ENCODE measurements at regions of chr6 and their contacts with region 1.

Region 1: DNA sequence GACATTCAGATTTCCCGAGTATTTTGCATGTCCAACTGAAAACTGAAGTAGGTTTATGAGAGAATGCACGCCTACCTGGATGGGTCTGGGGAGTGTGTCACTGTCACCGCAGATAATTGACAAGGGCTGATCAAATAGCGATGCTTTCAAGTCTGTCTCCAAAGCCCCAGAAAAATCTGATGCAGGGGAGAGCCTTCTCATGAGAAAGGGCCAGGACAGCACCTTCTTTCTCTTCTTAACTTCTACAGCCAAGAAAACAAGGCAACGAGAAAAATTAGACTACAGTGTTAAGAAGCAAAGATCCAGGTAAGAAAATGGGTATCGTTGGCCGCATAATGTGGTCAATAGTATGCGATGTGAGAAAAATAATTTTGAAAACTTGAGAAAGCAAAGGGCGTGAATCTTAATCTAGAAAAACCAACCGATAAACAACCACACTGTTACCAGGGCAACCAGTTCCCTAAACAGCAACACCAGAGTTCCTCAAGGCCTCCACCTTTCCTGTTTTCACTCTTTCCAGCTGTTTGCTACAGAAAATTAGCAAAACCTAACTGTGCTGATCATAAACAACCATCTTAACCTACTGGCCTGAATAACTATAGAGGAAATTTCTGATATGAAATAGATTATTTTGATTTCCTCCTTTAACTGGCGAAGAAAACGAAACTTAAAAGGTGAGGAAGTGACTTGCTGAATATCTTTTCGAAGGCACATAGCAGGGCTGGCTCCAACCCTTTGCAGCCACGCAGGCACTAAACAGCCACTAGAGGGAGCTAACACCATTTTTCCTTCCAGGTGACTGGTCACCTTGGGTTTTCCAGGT is 2.6 kb downstream of the TAGAP start:
- DNase-seq: peak; percentile 93
- ATAC-seq: peak; percentile 44
- H3K4me3 ChIP-seq: peak overlapping the region; percentile 72 to 100 (median 93)
- H3K4me3 Mint-ChIP-seq: peak overlapping the region; percentile 100
- H3K27ac ChIP-seq: peak overlapping the region; percentile 98 to 99
- H3K27ac Mint-ChIP-seq: peak overlapping the region; percentile 99
- H3K4me1 ChIP-seq: peaks cover 61 to 67% of the 10 kb centered on the region in 2 donors
- H3K4me1 Mint-ChIP-seq: peaks cover 72% of the 10 kb centered on the region
- H3K27me3 ChIP-seq: no peaks in the 10 kb centered on the region
- H3K27me3 Mint-ChIP-seq: no peaks in the 10 kb centered on the region
- CTCF ChIP-seq: peak; percentile 100

Region 2: DNA sequence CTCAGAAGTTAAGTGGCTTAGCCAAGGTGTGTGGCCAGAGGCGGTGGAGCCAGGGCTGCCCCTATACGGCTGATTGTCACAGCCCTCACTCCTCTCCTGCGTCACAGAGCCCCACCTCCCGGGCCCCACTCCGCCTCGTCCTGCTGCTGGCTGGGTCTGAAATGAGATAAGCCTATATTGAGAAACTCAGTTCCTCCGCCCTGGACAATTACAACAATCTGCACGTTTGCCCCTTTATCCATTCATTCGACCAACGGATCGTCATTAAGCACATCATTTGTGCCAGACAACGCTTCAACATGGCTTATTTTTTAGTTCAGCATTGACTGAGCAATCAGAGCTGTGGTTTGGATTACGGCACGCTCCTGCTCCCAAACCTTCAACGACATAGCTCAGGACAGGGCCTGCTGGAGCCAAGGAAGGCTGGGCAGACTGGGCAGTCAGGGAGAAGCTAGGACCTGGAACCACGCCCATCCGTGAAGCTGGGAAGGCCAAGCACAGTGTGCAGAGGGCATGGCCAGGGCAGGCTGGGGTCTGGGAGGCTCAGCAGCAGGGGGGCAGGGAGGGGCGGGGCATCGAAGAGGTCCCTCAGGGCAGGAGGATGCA is 206.5 kb before region 1 on chr6:
- CTCF ChIA-PET with region 1: no interaction called
- POLR2A ChIA-PET with region 1: no interaction called
- intact Hi-C with region 1: no loop called
- DNase-seq: no peak
- ATAC-seq: peak; percentile 57
- H3K4me3 ChIP-seq: no peak overlapping the region
- H3K4me3 Mint-ChIP-seq: no peak overlapping the region
- H3K27ac ChIP-seq: no peak overlapping the region
- H3K27ac Mint-ChIP-seq: peak overlapping the region; percentile 33
- H3K4me1 ChIP-seq: peaks cover 17 to 24% of the 10 kb centered on the region in 2 donors
- H3K4me1 Mint-ChIP-seq: peaks cover 26% of the 10 kb centered on the region
- H3K27me3 ChIP-seq: no peaks in the 10 kb centered on the region
- H3K27me3 Mint-ChIP-seq: no peaks in the 10 kb centered on the region
- CTCF ChIP-seq: no peak

Region 3: DNA sequence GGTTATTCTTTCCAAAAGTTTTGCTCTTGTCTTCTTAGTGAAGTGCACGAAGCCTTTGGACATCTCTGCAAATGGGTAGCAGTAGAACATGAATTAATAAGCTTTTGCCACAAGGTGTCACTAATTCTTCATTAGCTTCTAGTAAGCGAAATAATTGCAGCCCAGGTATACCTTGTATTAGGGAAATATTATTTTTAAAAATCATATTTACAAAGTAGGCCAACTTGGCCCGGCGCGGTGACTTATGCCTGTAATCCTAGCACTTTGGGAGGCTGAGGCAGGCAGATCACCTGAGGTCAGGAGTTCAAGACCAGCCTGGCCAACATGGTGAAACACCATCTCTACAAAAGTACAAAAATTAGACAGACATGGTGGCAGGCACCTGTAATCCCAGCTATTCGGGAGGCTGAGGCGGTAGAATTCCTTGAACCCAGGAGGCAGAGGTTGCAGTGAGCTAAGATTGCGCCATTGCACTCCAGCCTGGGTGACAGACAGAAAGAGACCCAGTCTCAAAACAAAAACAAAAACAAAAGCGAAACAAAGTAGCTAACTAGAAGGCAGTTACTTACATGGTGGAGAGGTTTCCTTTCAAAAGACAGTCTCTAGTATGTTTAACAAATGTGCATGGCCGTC is 33.4 kb before region 1 on chr6:
- CTCF ChIA-PET with region 1: interaction called, 181 read pairs
- POLR2A ChIA-PET with region 1: interaction called, 12 read pairs
- intact Hi-C with region 1: loop called (anchors 2 kb)
- DNase-seq: peak; percentile 78
- ATAC-seq: peak; percentile 82
- H3K4me3 ChIP-seq: peak overlapping the region in 2 of 5 experiments; percentile 26 to 48
- H3K4me3 Mint-ChIP-seq: peak overlapping the region; percentile 38
- H3K27ac ChIP-seq: no peak overlapping the region
- H3K27ac Mint-ChIP-seq: peak overlapping the region; percentile 32
- H3K4me1 ChIP-seq: peaks cover 17 to 25% of the 10 kb centered on the region in 2 donors
- H3K4me1 Mint-ChIP-seq: peaks cover 39% of the 10 kb centered on the region
- H3K27me3 ChIP-seq: no peaks in the 10 kb centered on the region
- H3K27me3 Mint-ChIP-seq: no peaks in the 10 kb centered on the region
- CTCF ChIP-seq: peak; percentile 79

Region 4: DNA sequence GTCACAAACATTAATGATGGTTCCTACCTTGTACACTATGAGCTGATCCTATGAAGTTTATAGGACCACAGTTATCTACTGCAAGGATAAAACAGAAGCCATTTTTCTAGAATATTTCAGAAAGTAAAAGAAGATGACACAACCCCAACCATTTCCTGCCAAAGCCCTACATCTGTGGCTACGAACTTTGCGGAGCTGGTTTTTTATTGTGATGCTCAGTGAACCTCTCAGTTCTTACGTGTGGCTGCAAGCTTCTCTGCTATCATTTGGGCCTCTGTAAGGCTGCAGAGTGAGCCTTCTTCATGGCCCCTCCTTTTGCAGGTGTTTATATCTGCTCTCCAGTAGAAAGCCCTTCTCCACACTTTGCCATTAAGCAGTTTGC is 20.3 kb after region 1 on chr6:
- CTCF ChIA-PET with region 1: interaction called, 71 read pairs
- POLR2A ChIA-PET with region 1: interaction called, 25 read pairs
- intact Hi-C with region 1: loop called (anchors 1 kb)
- DNase-seq: peak; percentile 86
- ATAC-seq: peak; percentile 90
- H3K4me3 ChIP-seq: peak overlapping the region in 4 of 5 experiments; percentile 7 to 14 (median 8)
- H3K4me3 Mint-ChIP-seq: peak overlapping the region; percentile 72
- H3K27ac ChIP-seq: peak overlapping the region; percentile 93 to 96
- H3K27ac Mint-ChIP-seq: peak overlapping the region; percentile 98
- H3K4me1 ChIP-seq: peaks cover 48% of the 10 kb centered on the region in 2 donors
- H3K4me1 Mint-ChIP-seq: peaks cover 66% of the 10 kb centered on the region
- H3K27me3 ChIP-seq: no peaks in the 10 kb centered on the region
- H3K27me3 Mint-ChIP-seq: no peaks in the 10 kb centered on the region
- CTCF ChIP-seq: no peak

Region 5: DNA sequence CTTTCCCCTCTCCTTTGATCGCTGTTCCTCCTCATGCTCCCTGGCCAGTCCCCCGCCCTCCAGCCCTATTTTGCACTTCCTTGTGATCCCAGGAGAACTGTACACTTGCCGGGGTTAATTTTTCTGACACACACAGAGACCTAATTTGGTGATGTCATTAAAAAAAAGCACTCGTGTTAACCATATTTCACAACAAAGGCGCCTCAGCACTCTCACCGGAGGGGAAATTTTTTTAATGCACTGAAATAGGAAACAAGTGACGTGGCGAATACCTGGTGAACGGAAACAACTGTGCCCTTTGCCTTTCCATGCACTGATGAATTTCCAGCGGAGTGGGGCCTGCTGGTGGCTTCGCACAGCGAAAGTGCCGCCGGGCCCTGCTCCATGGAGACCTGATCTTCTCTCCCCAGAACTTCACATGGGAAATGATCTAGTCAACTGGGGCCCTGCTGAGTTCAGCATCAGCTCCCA is 56.5 kb after region 1 on chr6:
- CTCF ChIA-PET with region 1: interaction called, 497 read pairs
- POLR2A ChIA-PET with region 1: interaction called, 62 read pairs
- intact Hi-C with region 1: loop called (anchors 1 kb)
- DNase-seq: peak; percentile 93
- ATAC-seq: peak; percentile 44
- H3K4me3 ChIP-seq: peak overlapping the region in 3 of 5 experiments; percentile 5 to 38 (median 13)
- H3K4me3 Mint-ChIP-seq: peak overlapping the region; percentile 77
- H3K27ac ChIP-seq: peak overlapping the region; percentile 95 to 98
- H3K27ac Mint-ChIP-seq: peak overlapping the region; percentile 93
- H3K4me1 ChIP-seq: peaks cover 77 to 88% of the 10 kb centered on the region in 2 donors
- H3K4me1 Mint-ChIP-seq: peaks cover 92% of the 10 kb centered on the region
- H3K27me3 ChIP-seq: no peaks in the 10 kb centered on the region
- H3K27me3 Mint-ChIP-seq: no peaks in the 10 kb centered on the region
- CTCF ChIP-seq: no peak

Region 6: GRCh38 chr6:159116343-159116742 is 74.1 kb after region 1 on chr6:
- CTCF ChIA-PET with region 1: interaction called, 41 read pairs
- POLR2A ChIA-PET with region 1: interaction called, 6 read pairs
- intact Hi-C with region 1: no loop called
- DNase-seq: peak; percentile 93
- ATAC-seq: peak; percentile 84
- H3K4me3 ChIP-seq: peak overlapping the region in 2 of 5 experiments; percentile 0 to 48
- H3K4me3 Mint-ChIP-seq: peak overlapping the region; percentile 88
- H3K27ac ChIP-seq: peak overlapping the region; percentile 99
- H3K27ac Mint-ChIP-seq: peak overlapping the region; percentile 95
- H3K4me1 ChIP-seq: peaks cover 86 to 87% of the 10 kb centered on the region in 2 donors
- H3K4me1 Mint-ChIP-seq: peaks cover 87% of the 10 kb centered on the region
- H3K27me3 ChIP-seq: no peaks in the 10 kb centered on the region
- H3K27me3 Mint-ChIP-seq: no peaks in the 10 kb centered on the region
- CTCF ChIP-seq: no peak

Region 7: GRCh38 chr6:159602431-159603041 is 560.3 kb after region 1 on chr6:
- CTCF ChIA-PET with region 1: no interaction called
- POLR2A ChIA-PET with region 1: no interaction called
- intact Hi-C with region 1: no loop called
- DNase-seq: no peak
- ATAC-seq: no peak
- H3K4me3 ChIP-seq: no peak overlapping the region
- H3K4me3 Mint-ChIP-seq: no peak overlapping the region
- H3K27ac ChIP-seq: no peak overlapping the region
- H3K27ac Mint-ChIP-seq: no peak overlapping the region
- H3K4me1 ChIP-seq: peaks cover 0 to 4% of the 10 kb centered on the region in 2 donors
- H3K4me1 Mint-ChIP-seq: no peaks in the 10 kb centered on the region
- H3K27me3 ChIP-seq: peaks cover 0 to 16% (median 0%) of the 10 kb centered on the region in 4 experiments
- H3K27me3 Mint-ChIP-seq: peaks cover 11% of the 10 kb centered on the region
- CTCF ChIP-seq: no peak

Measured in B cell (primary cell).